Naive thymus-derived CD4-positive, alpha-beta T cell (primary cell): ENCODE measurements at regions of chr2 and their contacts with region 1.

Region 1: GRCh38 chr2:161136696-161137324 is 23.4 kb upstream of the TANK start:
- DNase-seq: peak in 6 of 9 donors; percentile 31 to 76 (median 48)
- ATAC-seq: peak; percentile 94
- H3K4me3 ChIP-seq: peak overlapping the region; percentile 67
- H3K4me3 Mint-ChIP-seq: peak overlapping the region; percentile 68 to 98 (median 91)
- H3K27ac ChIP-seq: peak overlapping the region; percentile 83
- H3K27ac Mint-ChIP-seq: peak overlapping the region; percentile 89 to 99 (median 95)
- H3K4me1 ChIP-seq: peaks cover 21 to 27% of the 10 kb centered on the region in 2 donors
- H3K4me1 Mint-ChIP-seq: peaks cover 23 to 71% (median 58%) of the 10 kb centered on the region in 7 donors
- H3K27me3 ChIP-seq: no peaks in the 10 kb centered on the region
- H3K27me3 Mint-ChIP-seq: no peaks in the 10 kb centered on the region

Region 2: DNA sequence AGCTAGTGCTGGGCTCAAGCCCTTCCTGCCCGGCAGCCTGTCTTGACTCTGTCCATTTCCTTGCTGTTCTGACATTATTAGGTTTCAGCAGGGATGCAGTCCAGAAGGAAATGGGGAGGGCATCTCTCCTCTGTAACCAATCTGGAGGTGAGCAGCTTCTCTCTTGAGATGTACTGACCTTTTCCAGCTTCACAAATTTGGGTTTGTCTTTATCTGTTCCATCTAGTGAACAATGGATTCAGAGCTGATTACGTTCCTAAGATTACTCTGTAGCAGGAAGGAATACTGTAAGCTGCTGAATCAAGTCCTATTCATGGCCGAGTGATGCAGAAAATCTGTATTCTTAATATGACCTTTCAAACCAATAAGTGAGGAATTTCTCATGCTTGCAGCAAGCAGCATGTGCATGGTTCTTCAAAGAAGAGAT is 1085.4 kb before region 1 on chr2:
- CTCF ChIA-PET with region 1: no interaction called
- POLR2A ChIA-PET with region 1: no interaction called
- intact Hi-C with region 1: no loop called
- DNase-seq: no peak
- ATAC-seq: no peak
- H3K4me3 ChIP-seq: no peak overlapping the region
- H3K4me3 Mint-ChIP-seq: no peak overlapping the region
- H3K27ac ChIP-seq: no peak overlapping the region
- H3K27ac Mint-ChIP-seq: no peak overlapping the region
- H3K4me1 ChIP-seq: no peaks in the 10 kb centered on the region
- H3K4me1 Mint-ChIP-seq: no peaks in the 10 kb centered on the region
- H3K27me3 ChIP-seq: no peaks in the 10 kb centered on the region
- H3K27me3 Mint-ChIP-seq: peaks cover 18 to 25% (median 22%) of the 10 kb centered on the region in 5 donors

Region 3: GRCh38 chr2:161090411-161090810 is 46.4 kb before region 1 on chr2:
- CTCF ChIA-PET with region 1: no interaction called
- POLR2A ChIA-PET with region 1: no interaction called
- intact Hi-C with region 1: loop called in 1 of 2 experiments (anchors 2 kb)
- DNase-seq: peak in 6 of 9 donors; percentile 26 to 47 (median 39)
- ATAC-seq: peak; percentile 76
- H3K4me3 ChIP-seq: peak overlapping the region; percentile 20
- H3K4me3 Mint-ChIP-seq: peak overlapping the region in 9 of 10 donors; percentile 49 to 81 (median 71)
- H3K27ac ChIP-seq: no peak overlapping the region
- H3K27ac Mint-ChIP-seq: peak overlapping the region in 7 of 9 donors; percentile 11 to 91 (median 74)
- H3K4me1 ChIP-seq: peaks cover 5 to 11% of the 10 kb centered on the region in 2 donors
- H3K4me1 Mint-ChIP-seq: peaks cover 13 to 52% (median 19%) of the 10 kb centered on the region in 7 donors
- H3K27me3 ChIP-seq: no peaks in the 10 kb centered on the region
- H3K27me3 Mint-ChIP-seq: no peaks in the 10 kb centered on the region